Endothelial cell of umbilical vein (primary cell): ENCODE measurements at regions of chr22 and their contacts with region 1.

Region 1: GRCh38 chr22:19152942-19153883 is 3.1 kb upstream of the GSC2 start:
- DNase-seq: no peak
- H3K4me3 ChIP-seq: no peak overlapping the region
- H3K27ac ChIP-seq: no peak overlapping the region
- H3K4me1 ChIP-seq: no peaks in the 10 kb centered on the region
- H3K27me3 ChIP-seq: peaks cover 34 to 38% of the 10 kb centered on the region in 2 experiments
- CTCF ChIP-seq: no peak
- POLR2A ChIP-seq: no peak

Region 2: GRCh38 chr22:19011075-19011474 is 142.1 kb before region 1 on chr22:
- CTCF ChIA-PET with region 1: no interaction called
- POLR2A ChIA-PET with region 1: no interaction called
- dilution Hi-C with region 1: no loop called
- intact Hi-C with region 1: no loop called
- DNase-seq: no peak
- H3K4me3 ChIP-seq: no peak overlapping the region
- H3K27ac ChIP-seq: no peak overlapping the region
- H3K4me1 ChIP-seq: no peaks in the 10 kb centered on the region
- H3K27me3 ChIP-seq: peaks cover 0 to 2% of the 10 kb centered on the region in 2 experiments
- CTCF ChIP-seq: no peak
- POLR2A ChIP-seq: no peak

Region 3: DNA sequence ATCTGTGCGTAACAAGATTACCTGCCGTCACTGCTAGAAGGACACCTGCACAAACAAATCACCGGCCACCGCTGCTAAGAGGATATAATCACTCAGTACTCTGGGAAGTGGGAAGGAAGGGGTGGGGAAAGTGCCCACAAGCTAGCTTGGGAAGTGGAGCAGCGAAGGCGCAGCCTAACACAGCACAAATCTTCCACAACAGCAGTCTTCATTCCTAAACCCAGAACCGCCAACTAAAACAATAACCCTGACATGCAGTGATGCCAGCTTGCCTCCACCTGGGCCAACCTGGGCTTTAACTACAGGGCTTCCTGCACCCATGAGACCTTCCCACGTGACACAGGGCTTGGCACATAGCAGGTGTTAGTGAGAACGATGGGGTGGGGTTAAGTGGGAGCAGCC is 36.1 kb before region 1 on chr22:
- CTCF ChIA-PET with region 1: no interaction called
- POLR2A ChIA-PET with region 1: interaction called, 10 read pairs
- dilution Hi-C with region 1: no loop called
- intact Hi-C with region 1: no loop called
- DNase-seq: no peak
- H3K4me3 ChIP-seq: no peak overlapping the region
- H3K27ac ChIP-seq: no peak overlapping the region
- H3K4me1 ChIP-seq: peaks cover 9% of the 10 kb centered on the region
- H3K27me3 ChIP-seq: no peaks in the 10 kb centered on the region
- CTCF ChIP-seq: no peak
- POLR2A ChIP-seq: no peak

Region 4: GRCh38 chr22:19407649-19408606 is 254.7 kb after region 1 on chr22:
- CTCF ChIA-PET with region 1: no interaction called
- POLR2A ChIA-PET with region 1: no interaction called
- dilution Hi-C with region 1: no loop called
- intact Hi-C with region 1: no loop called
- DNase-seq: no peak
- H3K4me3 ChIP-seq: no peak overlapping the region
- H3K27ac ChIP-seq: no peak overlapping the region
- H3K4me1 ChIP-seq: no peaks in the 10 kb centered on the region
- H3K27me3 ChIP-seq: no peaks in the 10 kb centered on the region
- CTCF ChIP-seq: no peak
- POLR2A ChIP-seq: no peak